ENCODE measurements at regions of chr5 and their contacts with region 1.

Region 1: DNA sequence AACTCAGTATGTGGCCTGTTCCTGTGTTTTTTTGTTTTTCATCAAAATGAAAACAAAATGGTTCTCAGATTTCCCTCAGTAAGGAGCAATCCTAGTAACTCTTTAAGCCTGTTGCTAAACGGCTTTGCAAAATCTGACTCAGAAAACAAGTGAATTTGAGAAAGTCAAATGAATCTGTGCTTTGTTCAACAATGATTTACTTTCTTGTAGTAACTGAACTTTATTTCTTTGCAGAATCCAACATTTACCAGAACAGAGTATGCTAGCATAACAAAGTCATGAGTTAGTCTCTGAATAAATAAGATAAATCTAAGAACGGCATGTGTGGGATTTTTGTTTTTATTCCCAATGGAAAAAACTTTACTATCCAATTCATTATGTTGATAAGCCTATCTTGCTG is 93.8 kb downstream of the OXCT1 start:
- DNase-seq: no peak
- CTCF ChIP-seq: no peak

Region 2: GRCh38 chr5:41722359-41722950 is 54.0 kb before region 1 on chr5:
- CTCF ChIA-PET with region 1: no interaction called
- POLR2A ChIA-PET with region 1: no interaction called
- DNase-seq: no peak
- CTCF ChIP-seq: peak; percentile 43

Region 3: GRCh38 chr5:41763081-41763480 is 13.4 kb before region 1 on chr5:
- CTCF ChIA-PET with region 1: interaction called, 21 read pairs
- POLR2A ChIA-PET with region 1: no interaction called
- DNase-seq: no peak
- CTCF ChIP-seq: no peak

Region 4: DNA sequence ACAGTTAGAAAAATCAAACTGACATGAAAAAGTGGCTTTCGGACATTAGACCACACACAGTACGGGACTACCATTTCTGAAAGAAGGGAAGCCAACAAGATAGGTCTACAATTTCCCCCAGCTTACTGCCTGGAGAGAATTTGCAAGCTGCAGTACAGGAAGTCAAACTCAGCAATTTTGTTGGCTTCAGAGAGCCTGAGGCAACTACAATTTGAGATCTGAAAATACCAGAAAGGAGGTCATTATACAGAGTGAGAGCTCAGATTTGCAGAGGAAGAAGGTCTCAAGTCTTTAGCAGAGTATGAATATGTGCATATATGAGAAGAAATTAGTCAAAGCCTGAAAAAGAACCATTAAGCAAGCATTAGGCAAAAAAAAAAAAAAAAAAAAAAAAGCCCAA is 10.8 kb after region 1 on chr5:
- CTCF ChIA-PET with region 1: interaction called, 18 read pairs
- POLR2A ChIA-PET with region 1: no interaction called
- DNase-seq: no peak
- CTCF ChIP-seq: no peak

Region 5: DNA sequence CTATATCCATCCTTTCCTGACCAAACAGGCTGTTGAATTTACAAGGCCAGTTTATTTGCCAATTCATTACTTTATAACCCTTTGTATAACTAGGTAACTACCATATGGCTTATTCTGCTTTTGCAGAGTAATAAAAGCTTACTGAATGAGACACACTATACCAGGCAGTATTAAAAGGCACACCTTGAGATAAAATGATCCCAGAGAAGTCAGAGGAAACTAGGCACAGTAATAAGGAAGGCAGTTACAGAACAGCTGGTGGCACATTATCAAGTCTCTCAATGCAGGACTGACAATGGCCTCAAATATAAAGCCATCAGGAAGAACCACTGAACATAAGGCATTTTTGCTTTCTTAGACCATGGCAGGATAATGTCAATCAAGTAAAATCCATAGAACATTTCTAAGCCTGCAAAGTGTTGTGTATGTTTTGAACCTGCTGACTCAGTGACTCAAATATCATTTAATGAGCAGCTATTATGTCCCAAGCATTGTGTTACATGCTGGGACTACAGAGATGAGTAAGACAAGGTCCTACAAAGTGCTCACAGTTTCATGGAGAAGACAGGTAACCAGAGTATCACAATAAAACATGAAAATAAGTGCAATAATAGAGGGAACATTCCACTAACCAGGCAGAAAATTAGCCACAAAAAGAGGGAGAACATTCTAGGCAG is 41.3 kb after region 1 on chr5:
- CTCF ChIA-PET with region 1: no interaction called
- POLR2A ChIA-PET with region 1: no interaction called
- DNase-seq: no peak
- CTCF ChIP-seq: no peak